CD4-positive, alpha-beta T cell (primary cell): ENCODE measurements at regions of chr1 and their contacts with region 1.

Region 1: DNA sequence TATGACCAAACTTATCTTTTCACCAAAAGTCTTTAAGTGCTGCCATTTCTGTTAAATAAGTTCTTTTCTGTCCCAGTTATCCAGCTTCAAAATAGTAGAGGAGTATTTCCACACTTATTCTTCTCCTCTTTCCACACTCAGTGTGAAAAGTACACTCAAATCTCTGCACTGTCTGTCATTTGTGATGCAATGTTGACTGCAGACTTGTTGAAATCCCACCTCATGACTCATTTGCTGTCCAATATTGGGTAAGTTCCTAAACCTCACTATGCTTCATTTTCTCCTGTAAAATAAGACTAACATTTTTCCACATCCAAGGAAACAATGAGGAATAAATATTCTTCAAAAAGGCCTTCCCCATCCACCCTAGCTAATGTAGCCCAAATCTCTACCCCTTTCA is 17.5 kb downstream of the LRRIQ3 start:
- DNase-seq: no peak
- ATAC-seq: no peak
- H3K4me3 ChIP-seq: no peak overlapping the region
- H3K4me3 Mint-ChIP-seq: no peak overlapping the region
- H3K27ac ChIP-seq: no peak overlapping the region
- H3K27ac Mint-ChIP-seq: no peak overlapping the region
- H3K4me1 ChIP-seq: no peaks in the 10 kb centered on the region
- H3K4me1 Mint-ChIP-seq: no peaks in the 10 kb centered on the region
- H3K27me3 ChIP-seq: no peaks in the 10 kb centered on the region
- H3K27me3 Mint-ChIP-seq: no peaks in the 10 kb centered on the region
- CTCF ChIP-seq: no peak

Region 2: DNA sequence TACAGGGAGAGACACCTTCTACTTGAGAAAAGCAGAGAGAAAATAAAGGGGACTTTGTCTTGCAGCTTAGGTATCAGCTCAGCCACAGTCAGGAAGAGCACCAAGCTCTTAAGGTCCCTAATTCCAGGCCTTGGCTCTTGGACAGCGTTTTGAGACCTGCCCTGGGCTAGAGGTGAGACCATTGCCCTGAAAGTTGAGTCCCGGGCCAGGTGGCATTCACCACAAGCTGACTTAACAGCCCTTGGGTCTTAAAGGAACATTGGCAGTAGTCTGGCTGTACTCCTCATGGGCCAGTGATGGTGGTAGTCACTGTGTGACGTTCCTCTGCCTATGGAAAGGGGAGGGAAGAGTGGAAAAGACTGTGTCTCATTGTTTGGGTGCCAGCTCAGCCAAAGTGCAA is 43.0 kb after region 1 on chr1:
- CTCF ChIA-PET with region 1: no interaction called
- POLR2A ChIA-PET with region 1: no interaction called
- intact Hi-C with region 1: loop called in 1 of 2 experiments (anchors 2 kb)
- DNase-seq: no peak
- ATAC-seq: no peak
- H3K4me3 ChIP-seq: no peak overlapping the region
- H3K4me3 Mint-ChIP-seq: no peak overlapping the region
- H3K27ac ChIP-seq: no peak overlapping the region
- H3K27ac Mint-ChIP-seq: no peak overlapping the region
- H3K4me1 ChIP-seq: no peaks in the 10 kb centered on the region
- H3K4me1 Mint-ChIP-seq: no peaks in the 10 kb centered on the region
- H3K27me3 ChIP-seq: no peaks in the 10 kb centered on the region
- H3K27me3 Mint-ChIP-seq: no peaks in the 10 kb centered on the region
- CTCF ChIP-seq: no peak